ENCODE measurements at regions of chr5 and their contacts with region 1.

Region 1: GRCh38 chr5:40223884-40224402 is 455.8 kb upstream of the PTGER4 start:
- DNase-seq: no peak
- ATAC-seq: peak; percentile 63
- H3K4me3 Mint-ChIP-seq: peak overlapping the region; percentile 21
- H3K27ac Mint-ChIP-seq: peak overlapping the region; percentile 79
- H3K4me1 Mint-ChIP-seq: peaks cover 45% of the 10 kb centered on the region
- H3K27me3 Mint-ChIP-seq: peaks cover 5% of the 10 kb centered on the region
- CTCF ChIP-seq: no peak

Region 2: GRCh38 chr5:40277161-40277906 is 53.4 kb after region 1 on chr5:
- CTCF ChIA-PET with region 1: no interaction called
- POLR2A ChIA-PET with region 1: no interaction called
- intact Hi-C with region 1: loop called (anchors 1 kb)
- DNase-seq: no peak
- ATAC-seq: peak; percentile 90
- H3K4me3 Mint-ChIP-seq: peak overlapping the region; percentile 30
- H3K27ac Mint-ChIP-seq: peak overlapping the region; percentile 77
- H3K4me1 Mint-ChIP-seq: peaks cover 30% of the 10 kb centered on the region
- H3K27me3 Mint-ChIP-seq: no peaks in the 10 kb centered on the region
- CTCF ChIP-seq: no peak

Measured in activated B cell treated with CpG ODN at 0.5 μM for 24 hours (primary cell).